Activated T-helper 1 cell treated with anti-CD3 and anti-CD28 coated beads, Interleukin-12 subunit alpha, Interleukin-12 subunit beta, Interleukin-2, Interleukin-4 antibody, amounts not matched to agents 30 ng/mL and 10 ng/mL and 1 ng/mL, durations not matched to agents 14 hours and 24 hours and 36 hours (primary cell): ENCODE measurements at regions of chr11 and their contacts with region 1.

Region 1: GRCh38 chr11:118240999-118241768 is 11.0 kb downstream of the MPZL3 start:
- DNase-seq: peak; percentile 66
- H3K4me3 Mint-ChIP-seq: peak overlapping the region; percentile 83
- H3K27ac Mint-ChIP-seq: peak overlapping the region; percentile 99
- H3K4me1 Mint-ChIP-seq: peaks cover 89% of the 10 kb centered on the region
- H3K27me3 Mint-ChIP-seq: no peaks in the 10 kb centered on the region

Region 2: DNA sequence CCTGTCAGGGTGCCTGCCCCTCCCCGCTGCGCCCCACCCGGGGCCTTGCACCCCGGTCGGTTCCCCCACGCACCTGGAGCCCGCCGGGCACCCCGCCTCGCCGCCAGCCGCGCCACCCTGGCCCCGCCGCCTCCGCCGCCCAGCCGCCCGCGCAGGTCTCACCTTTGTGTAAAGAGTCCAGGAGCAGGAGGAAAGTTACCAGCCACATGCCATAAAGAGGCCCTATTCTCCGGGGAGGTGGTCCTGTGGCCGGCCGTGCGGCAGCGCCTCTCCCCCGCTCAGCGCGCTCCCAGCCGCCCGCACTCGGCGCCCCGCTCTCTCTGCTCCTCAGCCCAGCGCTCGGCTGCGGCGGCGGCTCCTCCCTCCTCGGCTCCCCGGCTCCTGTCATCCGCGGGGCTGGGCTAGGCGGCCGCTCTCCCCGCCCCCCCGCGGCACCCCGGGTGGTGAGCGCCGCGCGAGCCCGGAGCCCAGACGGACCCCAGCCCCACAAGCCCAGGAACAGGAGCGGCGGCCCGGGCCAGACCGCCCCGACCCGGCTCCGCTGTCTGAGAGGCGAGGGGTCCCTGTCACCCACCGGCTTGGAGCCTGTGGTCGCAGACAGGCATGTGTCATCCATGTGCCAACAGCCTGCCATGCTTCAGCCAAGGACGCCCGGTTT is 444.2 kb before region 1 on chr11 and contains the start of gene DSCAML1:
- intact Hi-C with region 1: no loop called
- DNase-seq: peak; percentile 24
- H3K4me3 Mint-ChIP-seq: peak within 1 kb of the TSS; percentile 15
- H3K27ac Mint-ChIP-seq: no peak within 1 kb of the TSS
- H3K4me1 Mint-ChIP-seq: no peaks in the 10 kb centered on the region
- H3K27me3 Mint-ChIP-seq: peaks cover 59% of the 10 kb centered on the region
- total RNA-seq, gene DSCAML1: not detected in 2 replicates

Region 3: GRCh38 chr11:118216621-118217481 is 24.3 kb before region 1 on chr11:
- intact Hi-C with region 1: loop called (anchors 1 kb)
- DNase-seq: peak; percentile 41
- H3K4me3 Mint-ChIP-seq: peak overlapping the region; percentile 83
- H3K27ac Mint-ChIP-seq: peak overlapping the region; percentile 94
- H3K4me1 Mint-ChIP-seq: peaks cover 97% of the 10 kb centered on the region
- H3K27me3 Mint-ChIP-seq: no peaks in the 10 kb centered on the region

Region 4: GRCh38 chr11:118224511-118225188 is 16.5 kb before region 1 on chr11 and contains the start of gene JAML:
- intact Hi-C with region 1: loop called (anchors 1 kb)
- DNase-seq: peak; percentile 67
- H3K4me3 Mint-ChIP-seq: peak within 1 kb of the TSS; percentile 88
- H3K27ac Mint-ChIP-seq: peak within 1 kb of the TSS; percentile 98
- H3K4me1 Mint-ChIP-seq: peaks cover 58% of the 10 kb centered on the region
- H3K27me3 Mint-ChIP-seq: no peaks in the 10 kb centered on the region
- total RNA-seq, gene JAML: 264 and 271 TPM in 2 replicates

Region 5: DNA sequence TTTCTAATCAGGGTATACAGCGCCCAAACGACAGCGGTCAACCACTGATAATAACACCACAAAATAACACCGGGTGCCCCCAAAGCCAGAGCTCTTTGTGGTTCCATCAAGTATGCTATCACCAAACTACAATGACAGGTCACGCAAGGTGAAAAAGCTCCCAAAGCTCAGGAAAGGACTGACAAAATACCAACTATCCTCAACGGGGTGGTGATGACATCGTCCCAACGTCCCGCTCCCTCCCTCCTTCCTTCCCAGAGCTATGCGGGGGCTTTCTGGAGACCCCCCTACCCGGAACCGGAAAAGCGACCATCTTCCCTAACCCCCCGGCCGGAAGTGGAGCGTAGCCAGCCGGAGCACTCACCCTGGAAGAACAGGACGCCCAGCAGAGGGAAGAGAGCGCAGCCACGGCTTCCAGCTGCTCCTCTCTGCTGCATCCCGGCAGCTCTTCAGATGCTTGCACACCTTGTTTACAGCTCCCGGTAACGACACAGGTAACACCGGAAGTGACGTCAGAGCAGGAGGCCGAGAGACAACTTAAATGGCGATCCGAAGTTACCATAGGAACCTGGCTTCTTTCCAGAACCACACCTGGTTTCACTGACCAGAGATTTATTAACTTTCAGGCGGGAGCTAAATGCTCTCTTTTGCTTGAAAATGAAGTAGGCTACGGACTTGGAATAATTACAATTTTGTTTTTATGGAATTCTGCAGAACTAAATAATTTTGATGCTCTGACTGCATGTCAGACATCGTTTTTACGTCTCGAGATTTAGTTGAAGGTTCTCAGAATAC is 10.9 kb after region 1 on chr11 and contains the start of gene MPZL3:
- intact Hi-C with region 1: loop called (anchors 1 kb)
- DNase-seq: peak; percentile 71
- H3K4me3 Mint-ChIP-seq: peak within 1 kb of the TSS; percentile 96
- H3K27ac Mint-ChIP-seq: peak within 1 kb of the TSS; percentile 97
- H3K4me1 Mint-ChIP-seq: peaks cover 51% of the 10 kb centered on the region
- H3K27me3 Mint-ChIP-seq: no peaks in the 10 kb centered on the region
- total RNA-seq, gene MPZL3: 63.5 and 69.3 TPM in 2 replicates

Region 6: GRCh38 chr11:118277306-118277705 is 36.1 kb after region 1 on chr11:
- intact Hi-C with region 1: loop called (anchors 5 kb)
- DNase-seq: no peak
- H3K4me3 Mint-ChIP-seq: no peak overlapping the region
- H3K27ac Mint-ChIP-seq: no peak overlapping the region
- H3K4me1 Mint-ChIP-seq: peaks cover 57% of the 10 kb centered on the region
- H3K27me3 Mint-ChIP-seq: no peaks in the 10 kb centered on the region

Region 7: GRCh38 chr11:118338637-118339061 is 97.5 kb after region 1 on chr11:
- intact Hi-C with region 1: loop called (anchors 1 kb)
- DNase-seq: peak; percentile 86
- H3K4me3 Mint-ChIP-seq: peak overlapping the region; percentile 90
- H3K27ac Mint-ChIP-seq: peak overlapping the region; percentile 99
- H3K4me1 Mint-ChIP-seq: peaks cover 68% of the 10 kb centered on the region
- H3K27me3 Mint-ChIP-seq: no peaks in the 10 kb centered on the region

Region 8: DNA sequence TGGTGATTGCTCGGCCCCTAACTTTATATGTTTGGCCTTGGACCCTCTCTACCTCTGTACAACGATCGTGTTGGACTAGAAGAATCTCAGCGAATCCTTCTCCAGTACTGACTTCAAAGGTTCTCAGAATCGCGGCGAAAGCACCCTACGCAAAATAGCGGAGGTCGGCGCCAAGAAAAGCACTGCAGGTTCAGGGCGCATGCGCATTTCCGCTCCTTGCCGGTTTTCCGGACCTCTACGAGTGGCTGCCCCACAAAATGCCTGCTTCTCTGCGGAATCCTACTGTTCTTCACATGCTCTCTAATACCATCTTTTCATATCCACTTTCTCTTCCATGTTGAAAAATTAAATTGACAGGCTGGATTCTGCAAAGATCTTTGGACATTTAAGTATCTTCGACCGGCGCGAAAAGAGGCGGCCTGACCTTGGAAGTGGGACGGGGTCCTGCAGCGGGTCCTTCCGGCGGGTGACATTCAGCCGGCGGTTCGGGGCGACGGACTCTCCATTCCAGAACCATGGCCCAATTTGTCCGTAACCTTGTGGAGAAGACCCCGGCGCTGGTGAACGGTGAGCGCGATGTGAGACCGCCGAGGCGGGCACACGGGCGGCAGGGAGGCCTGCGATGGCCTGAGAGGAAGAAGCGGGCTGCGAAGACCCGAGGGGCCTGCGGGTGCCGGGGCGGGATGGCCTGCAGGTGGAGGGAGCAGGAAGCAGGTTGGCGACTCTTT is 160.1 kb after region 1 on chr11 and contains the start of gene ATP5MG:
- intact Hi-C with region 1: loop called (anchors 5 kb)
- DNase-seq: peak; percentile 87
- H3K4me3 Mint-ChIP-seq: peak within 1 kb of the TSS; percentile 93
- H3K27ac Mint-ChIP-seq: peak within 1 kb of the TSS; percentile 96
- H3K4me1 Mint-ChIP-seq: peaks cover 68% of the 10 kb centered on the region
- H3K27me3 Mint-ChIP-seq: no peaks in the 10 kb centered on the region
- total RNA-seq, gene ATP5MG: 205 and 216 TPM in 2 replicates